PC-9 (cell line): ENCODE measurements at regions of chr15 and their contacts with region 1.

Region 1: DNA sequence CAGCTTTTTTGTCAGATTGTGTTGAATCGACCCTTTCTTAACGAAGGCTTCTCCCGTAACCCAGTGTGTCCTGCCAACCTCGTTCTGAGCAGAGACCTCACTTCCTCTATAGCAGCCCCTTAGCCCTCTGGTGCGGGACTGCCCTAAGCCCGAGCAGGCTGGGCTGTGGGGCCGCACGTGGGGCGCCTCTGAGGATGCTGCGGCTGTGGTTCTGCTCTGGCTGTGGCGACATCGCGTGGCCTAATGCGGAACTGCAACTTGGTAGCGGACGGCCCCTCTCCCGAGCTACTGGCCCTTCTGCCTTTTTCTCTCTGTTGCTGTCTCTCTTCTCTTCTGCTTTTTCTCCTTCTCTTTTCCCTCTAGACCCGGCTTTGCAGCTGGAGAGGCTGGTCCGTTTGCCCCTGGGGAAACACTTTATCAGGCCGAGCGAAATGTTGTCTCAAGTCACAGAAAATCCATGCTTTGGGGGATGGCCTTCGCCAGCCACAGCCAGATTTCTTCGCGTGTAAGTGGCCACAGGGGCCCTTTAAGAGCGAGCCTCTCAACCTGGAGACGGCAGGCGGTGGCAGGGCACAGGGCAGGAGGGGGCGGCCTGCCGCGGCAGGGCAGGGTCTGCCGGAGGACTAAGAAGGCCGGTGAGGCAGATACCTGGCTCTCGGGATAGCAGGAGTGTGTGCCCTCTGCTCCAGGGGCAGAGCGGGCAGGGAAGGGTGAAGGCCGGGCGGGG is 19.4 kb upstream of the KIF23 start:
- DNase-seq: peak in 1 of 2 experiments; percentile 77
- H3K4me3 ChIP-seq: no peak overlapping the region
- H3K27ac ChIP-seq: no peak overlapping the region
- H3K4me1 ChIP-seq: peaks cover 34% of the 10 kb centered on the region
- H3K27me3 ChIP-seq: no peaks in the 10 kb centered on the region
- CTCF ChIP-seq: peak; percentile 92

Region 2: GRCh38 chr15:68559345-68560310 is 835.1 kb before region 1 on chr15:
- CTCF ChIA-PET with region 1: no interaction called
- POLR2A ChIA-PET with region 1: no interaction called
- intact Hi-C with region 1: loop called (anchors 10 kb)
- DNase-seq: peak in 1 of 2 experiments; percentile 80
- H3K4me3 ChIP-seq: peak overlapping the region; percentile 47; the same call in 1 of the 2 replicates
- H3K27ac ChIP-seq: no peak overlapping the region
- H3K4me1 ChIP-seq: no peaks in the 10 kb centered on the region
- H3K27me3 ChIP-seq: no peaks in the 10 kb centered on the region
- CTCF ChIP-seq: peak; percentile 90

Region 3: GRCh38 chr15:69160141-69160993 is 234.4 kb before region 1 on chr15 and contains the start of gene GLCE:
- CTCF ChIA-PET with region 1: no interaction called
- POLR2A ChIA-PET with region 1: interaction called, 3 read pairs
- intact Hi-C with region 1: loop called (anchors 5 kb)
- DNase-seq: peak; percentile 94 to 98
- H3K4me3 ChIP-seq: peak within 1 kb of the TSS; percentile 88
- H3K27ac ChIP-seq: peak within 1 kb of the TSS; percentile 67
- H3K4me1 ChIP-seq: peaks cover 20% of the 10 kb centered on the region
- H3K27me3 ChIP-seq: no peaks in the 10 kb centered on the region
- CTCF ChIP-seq: no peak
- total RNA-seq, gene GLCE: 24.7 and 31.3 TPM in 2 replicates

Region 4: DNA sequence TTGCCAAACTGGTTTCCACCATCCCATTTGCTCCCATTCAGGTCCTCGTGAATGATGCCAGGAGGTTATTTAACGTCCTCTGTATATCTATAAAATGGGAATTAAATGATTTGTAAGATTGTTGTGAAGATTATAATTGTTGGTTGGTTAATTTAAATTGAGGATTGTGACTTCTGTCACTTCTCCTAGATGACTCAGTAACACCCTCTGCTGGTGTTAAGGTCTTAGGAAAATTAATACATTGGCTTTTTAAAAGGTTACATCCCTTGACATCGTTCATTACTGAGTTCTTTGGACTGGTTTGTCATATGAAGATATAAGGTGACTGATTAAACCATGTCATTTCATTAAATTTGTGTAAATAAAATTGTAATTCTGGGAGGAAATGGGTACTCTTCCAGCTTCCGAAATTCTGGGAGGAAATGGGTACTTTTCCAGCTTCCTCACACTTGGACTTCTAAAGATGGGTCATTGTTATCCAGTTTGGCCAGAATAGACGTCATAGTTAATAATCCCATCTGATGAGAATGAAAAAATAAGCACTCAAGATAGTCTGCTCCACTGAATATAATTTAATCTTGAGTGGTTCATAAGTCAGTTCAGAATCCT is 129.3 kb before region 1 on chr15:
- CTCF ChIA-PET with region 1: no interaction called
- POLR2A ChIA-PET with region 1: no interaction called
- intact Hi-C with region 1: loop called (anchors 5 kb)
- DNase-seq: no peak
- H3K4me3 ChIP-seq: no peak overlapping the region
- H3K27ac ChIP-seq: no peak overlapping the region
- H3K4me1 ChIP-seq: no peaks in the 10 kb centered on the region
- H3K27me3 ChIP-seq: no peaks in the 10 kb centered on the region
- CTCF ChIP-seq: peak; percentile 66

Region 5: GRCh38 chr15:69290346-69291164 is 104.2 kb before region 1 on chr15:
- CTCF ChIA-PET with region 1: interaction called, 15 read pairs
- POLR2A ChIA-PET with region 1: no interaction called
- intact Hi-C with region 1: no loop called
- DNase-seq: no peak
- H3K4me3 ChIP-seq: no peak overlapping the region
- H3K27ac ChIP-seq: no peak overlapping the region
- H3K4me1 ChIP-seq: peaks cover 4% of the 10 kb centered on the region; the same call in 1 of the 2 replicates
- H3K27me3 ChIP-seq: no peaks in the 10 kb centered on the region
- CTCF ChIP-seq: no peak

Region 6: GRCh38 chr15:69298697-69299441 is 95.8 kb before region 1 on chr15 and contains the start of gene PAQR5:
- CTCF ChIA-PET with region 1: no interaction called
- POLR2A ChIA-PET with region 1: no interaction called
- intact Hi-C with region 1: loop called (anchors 2 kb)
- DNase-seq: peak in 1 of 2 experiments; percentile 54
- H3K4me3 ChIP-seq: peak within 1 kb of the TSS; percentile 58; the same call in 1 of the 2 replicates
- H3K27ac ChIP-seq: no peak within 1 kb of the TSS
- H3K4me1 ChIP-seq: peaks cover 8% of the 10 kb centered on the region
- H3K27me3 ChIP-seq: 0 out of 2 replicates have a peak, but pooled peaks cover 5% of the 10 kb centered on the region
- CTCF ChIP-seq: no peak
- total RNA-seq, gene PAQR5: 4.9 and 5.1 TPM in 2 replicates

Region 7: DNA sequence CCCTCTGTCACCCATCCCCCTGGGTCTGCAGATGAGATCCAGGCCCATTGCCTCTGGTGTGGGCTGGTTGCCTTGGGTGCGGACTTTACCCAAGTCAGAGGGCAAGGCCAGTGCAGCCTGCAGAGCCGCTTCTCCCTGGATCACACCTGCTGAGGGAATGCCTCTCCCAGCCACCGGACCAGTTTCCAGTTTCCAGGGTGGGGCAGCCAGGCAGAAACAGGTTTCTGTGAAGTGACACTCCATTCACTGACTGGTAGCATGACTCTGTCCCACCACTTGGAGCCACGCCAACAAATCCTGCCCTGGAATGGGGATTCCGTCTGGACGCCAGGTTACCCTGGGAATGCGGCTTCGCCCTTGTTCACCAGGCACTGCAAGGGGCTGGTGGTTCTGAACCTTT is 66.0 kb before region 1 on chr15:
- CTCF ChIA-PET with region 1: no interaction called
- POLR2A ChIA-PET with region 1: no interaction called
- intact Hi-C with region 1: loop called (anchors 1 kb)
- DNase-seq: peak; percentile 76 to 87
- H3K4me3 ChIP-seq: no peak overlapping the region
- H3K27ac ChIP-seq: peak overlapping the region; percentile 55
- H3K4me1 ChIP-seq: peaks cover 14% of the 10 kb centered on the region
- H3K27me3 ChIP-seq: no peaks in the 10 kb centered on the region
- CTCF ChIP-seq: no peak

Region 8: DNA sequence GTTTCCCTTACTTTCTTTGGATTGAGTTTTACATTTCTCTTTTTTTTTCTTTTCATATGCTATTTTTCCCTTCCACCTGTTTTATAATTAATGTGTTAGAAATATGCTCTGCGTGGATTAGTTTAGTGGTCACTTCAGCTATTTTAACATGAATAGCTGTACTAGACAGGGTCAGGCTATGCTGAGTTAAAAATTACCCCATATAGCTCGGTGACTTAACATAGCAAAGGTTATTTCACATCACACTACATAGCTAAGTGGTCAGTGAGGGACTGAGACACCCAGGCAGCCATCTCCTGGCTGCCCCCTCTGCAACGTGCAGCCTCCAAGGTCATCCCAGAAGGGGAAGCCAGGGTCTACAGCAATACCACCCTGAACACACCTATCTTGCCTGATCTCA is 27.5 kb before region 1 on chr15:
- CTCF ChIA-PET with region 1: no interaction called
- POLR2A ChIA-PET with region 1: no interaction called
- intact Hi-C with region 1: no loop called
- DNase-seq: no peak
- H3K4me3 ChIP-seq: no peak overlapping the region
- H3K27ac ChIP-seq: no peak overlapping the region
- H3K4me1 ChIP-seq: no peaks in the 10 kb centered on the region
- H3K27me3 ChIP-seq: no peaks in the 10 kb centered on the region
- CTCF ChIP-seq: no peak